Sigmoid colon (tissue), 7 donors: ENCODE measurements at regions of chr9 and their contacts with region 1.

Region 1: GRCh38 chr9:108933718-108934322 is at the start of gene ELP1:
- DNase-seq: peak; percentile 96
- H3K4me3 ChIP-seq: peak within 1 kb of the TSS; percentile 65 to 88 (median 72)
- H3K27ac ChIP-seq: peak within 1 kb of the TSS; percentile 88 to 92 (median 90)
- H3K4me1 ChIP-seq: peaks cover 0 to 27% (median 21%) of the 10 kb centered on the region in 4 donors
- H3K27me3 ChIP-seq: no peaks in the 10 kb centered on the region
- CTCF ChIP-seq: no peak
- EP300 ChIP-seq: no peak
- POLR2A ChIP-seq: peak; percentile 18 to 48
- total RNA-seq, gene ELP1: 11.0 to 17.2 (median 15.3) TPM

Region 2: GRCh38 chr9:108953983-108954574 is 20.3 kb after region 1 on chr9:
- intact Hi-C with region 1: loop called (anchors 2 kb)
- DNase-seq: no peak
- H3K4me3 ChIP-seq: no peak overlapping the region
- H3K27ac ChIP-seq: peak overlapping the region in 3 of 4 donors; percentile 29 to 62 (median 62)
- H3K4me1 ChIP-seq: peaks cover 0 to 10% (median 8%) of the 10 kb centered on the region in 4 donors
- H3K27me3 ChIP-seq: no peaks in the 10 kb centered on the region
- CTCF ChIP-seq: peak; percentile 6 to 55 (median 44)
- EP300 ChIP-seq: no peak
- POLR2A ChIP-seq: no peak

Region 3: DNA sequence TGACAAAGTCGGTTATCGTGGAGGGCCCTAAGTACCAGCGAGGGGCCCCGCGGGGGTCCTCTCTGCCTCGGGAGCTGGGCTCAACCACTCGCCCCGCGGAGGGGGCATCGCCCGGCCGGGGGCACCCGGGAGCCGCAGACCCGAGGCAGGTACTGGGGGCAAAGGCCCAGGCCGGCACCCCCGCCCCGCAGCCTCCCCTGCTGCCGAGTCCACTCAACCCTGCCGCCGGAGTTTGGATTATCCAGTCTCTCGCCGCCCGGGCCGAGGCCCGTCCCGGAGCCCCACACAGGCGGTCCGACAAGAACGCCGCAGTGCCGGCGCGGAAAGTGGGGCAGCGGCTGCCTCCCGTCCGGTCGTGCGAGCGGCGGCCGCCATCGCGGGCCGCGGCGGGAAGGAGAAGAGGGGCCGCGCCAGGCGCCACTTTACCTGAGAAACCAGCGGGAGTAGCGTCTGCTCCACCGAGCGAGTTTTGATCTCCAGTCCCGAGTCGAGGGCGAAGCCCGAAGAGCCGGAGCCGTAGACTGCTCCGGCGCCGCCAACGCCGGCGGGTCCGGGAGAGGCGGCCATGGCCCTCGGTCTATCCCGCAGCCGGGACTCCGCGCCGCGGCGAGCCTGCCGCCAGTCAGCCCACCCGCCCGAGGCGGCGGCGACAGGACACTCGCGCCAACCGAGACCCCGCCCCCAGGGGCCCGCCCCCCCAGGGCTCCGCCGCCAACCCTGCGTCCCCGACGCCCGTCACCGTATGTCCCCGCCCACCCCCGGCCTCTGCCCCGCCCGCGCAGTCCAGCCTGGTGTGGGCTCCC is 79.3 kb after region 1 on chr9 and contains the start of gene CTNNAL1:
- intact Hi-C with region 1: loop called (anchors 5 kb)
- DNase-seq: peak; percentile 98
- H3K4me3 ChIP-seq: peak within 1 kb of the TSS; percentile 67 to 95 (median 87)
- H3K27ac ChIP-seq: peak within 1 kb of the TSS; percentile 96 to 100 (median 97)
- H3K4me1 ChIP-seq: peaks cover 0 to 46% (median 37%) of the 10 kb centered on the region in 4 donors
- H3K27me3 ChIP-seq: no peaks in the 10 kb centered on the region
- CTCF ChIP-seq: no peak
- EP300 ChIP-seq: no peak
- POLR2A ChIP-seq: peak; percentile 41 to 76
- total RNA-seq, gene CTNNAL1: 36.4 to 56.8 (median 42.6) TPM

Region 4: GRCh38 chr9:109119439-109120203 is 185.8 kb after region 1 on chr9 and contains the start of gene TMEM245:
- intact Hi-C with region 1: loop called (anchors 2 kb)
- DNase-seq: peak; percentile 98
- H3K4me3 ChIP-seq: peak within 1 kb of the TSS; percentile 73 to 97 (median 90)
- H3K27ac ChIP-seq: peak within 1 kb of the TSS; percentile 91 to 98 (median 94)
- H3K4me1 ChIP-seq: peaks cover 0 to 48% (median 46%) of the 10 kb centered on the region in 4 donors
- H3K27me3 ChIP-seq: no peaks in the 10 kb centered on the region
- CTCF ChIP-seq: no peak
- EP300 ChIP-seq: peak in 1 of 4 donors; percentile 7
- POLR2A ChIP-seq: peak; percentile 24 to 41
- total RNA-seq, gene TMEM245: 90.7 to 105 (median 99.5) TPM

Region 5: GRCh38 chr9:109411798-109412352 is 478.1 kb after region 1 on chr9:
- intact Hi-C with region 1: loop called (anchors 10 kb)
- DNase-seq: no peak
- H3K4me3 ChIP-seq: no peak overlapping the region
- H3K27ac ChIP-seq: no peak overlapping the region
- H3K4me1 ChIP-seq: peaks cover 0 to 8% (median 6%) of the 10 kb centered on the region in 4 donors
- H3K27me3 ChIP-seq: no peaks in the 10 kb centered on the region
- CTCF ChIP-seq: peak in 1 of 4 experiments; percentile 21
- EP300 ChIP-seq: no peak
- POLR2A ChIP-seq: no peak